ENCODE measurements at regions of chr12 and their contacts with region 1.

Region 1: GRCh38 chr12:27434673-27435565 is 11.6 kb upstream of the SMCO2 start:
- DNase-seq: peak; percentile 7
- H3K4me3 ChIP-seq: no peak overlapping the region
- H3K27ac ChIP-seq: no peak overlapping the region
- H3K4me1 ChIP-seq: no peaks in the 10 kb centered on the region
- H3K27me3 ChIP-seq: no peaks in the 10 kb centered on the region
- CTCF ChIP-seq: peak; percentile 60

Region 2: GRCh38 chr12:27449026-27449425 is 14.1 kb after region 1 on chr12:
- CTCF ChIA-PET with region 1: interaction called, 12 read pairs
- POLR2A ChIA-PET with region 1: no interaction called
- intact Hi-C with region 1: no loop called
- DNase-seq: no peak
- H3K4me3 ChIP-seq: no peak overlapping the region
- H3K27ac ChIP-seq: no peak overlapping the region
- H3K4me1 ChIP-seq: no peaks in the 10 kb centered on the region
- H3K27me3 ChIP-seq: no peaks in the 10 kb centered on the region
- CTCF ChIP-seq: no peak

Region 3: DNA sequence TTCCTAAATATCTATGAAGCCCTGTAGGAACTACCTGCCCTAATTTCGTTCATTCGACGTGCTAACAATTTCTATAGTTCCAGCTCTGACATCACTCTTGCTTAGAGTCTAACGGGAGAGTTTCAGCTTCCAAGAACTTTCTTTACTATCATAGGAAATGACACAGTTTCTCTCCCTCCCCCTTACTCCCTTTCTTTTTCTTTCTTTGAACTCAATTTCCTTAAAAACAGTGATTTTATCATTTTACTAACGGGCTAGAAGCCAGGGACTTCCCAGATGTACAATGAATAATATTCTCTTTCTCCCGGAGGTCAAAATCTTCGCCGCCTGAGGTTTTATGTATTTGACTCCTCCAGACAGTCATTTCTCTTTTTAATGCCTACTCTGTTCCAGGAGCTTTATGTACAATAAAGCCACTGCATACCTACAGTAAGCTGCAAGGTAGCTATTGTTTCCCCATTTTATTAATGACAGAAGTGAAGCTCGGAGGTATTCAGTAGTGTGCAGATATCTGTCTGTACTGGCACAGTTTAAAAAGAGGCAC is 27.3 kb after region 1 on chr12:
- CTCF ChIA-PET with region 1: no interaction called
- POLR2A ChIA-PET with region 1: no interaction called
- intact Hi-C with region 1: no loop called
- DNase-seq: peak; percentile 7
- H3K4me3 ChIP-seq: no peak overlapping the region
- H3K27ac ChIP-seq: no peak overlapping the region
- H3K4me1 ChIP-seq: peaks cover 7% of the 10 kb centered on the region
- H3K27me3 ChIP-seq: no peaks in the 10 kb centered on the region
- CTCF ChIP-seq: no peak

Region 4: DNA sequence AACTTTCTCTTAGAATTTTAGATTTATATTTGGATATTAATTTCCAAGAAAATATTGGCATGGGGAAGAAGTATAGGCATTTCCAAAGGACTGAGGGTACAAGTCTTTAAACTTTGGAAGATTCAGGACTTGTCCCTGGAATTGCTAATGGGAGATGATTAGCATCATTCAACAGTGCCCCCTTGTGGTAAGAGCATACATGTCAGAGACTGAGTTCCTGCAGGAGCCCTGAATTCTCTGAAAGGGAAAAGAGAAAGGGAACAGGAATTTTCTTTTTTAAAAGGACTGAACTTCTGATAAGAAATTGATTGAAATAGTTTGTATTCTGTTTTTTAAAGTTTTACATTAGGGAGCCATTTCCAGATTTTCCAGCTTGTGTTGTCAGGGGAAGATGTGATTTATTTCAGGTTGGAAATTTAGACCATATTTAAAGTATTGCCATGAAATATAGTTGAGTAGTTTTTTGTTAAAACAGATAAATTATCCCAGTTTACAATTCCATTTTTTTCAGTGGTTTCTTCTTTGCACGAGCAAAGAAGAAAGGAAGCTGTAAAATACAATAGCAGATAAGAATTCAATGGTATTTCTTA is 217.3 kb after region 1 on chr12:
- CTCF ChIA-PET with region 1: no interaction called
- POLR2A ChIA-PET with region 1: no interaction called
- intact Hi-C with region 1: loop called (anchors 2 kb)
- DNase-seq: peak; percentile 82
- H3K4me3 ChIP-seq: no peak overlapping the region
- H3K27ac ChIP-seq: no peak overlapping the region
- H3K4me1 ChIP-seq: no peaks in the 10 kb centered on the region
- H3K27me3 ChIP-seq: no peaks in the 10 kb centered on the region
- CTCF ChIP-seq: peak; percentile 92

Region 5: DNA sequence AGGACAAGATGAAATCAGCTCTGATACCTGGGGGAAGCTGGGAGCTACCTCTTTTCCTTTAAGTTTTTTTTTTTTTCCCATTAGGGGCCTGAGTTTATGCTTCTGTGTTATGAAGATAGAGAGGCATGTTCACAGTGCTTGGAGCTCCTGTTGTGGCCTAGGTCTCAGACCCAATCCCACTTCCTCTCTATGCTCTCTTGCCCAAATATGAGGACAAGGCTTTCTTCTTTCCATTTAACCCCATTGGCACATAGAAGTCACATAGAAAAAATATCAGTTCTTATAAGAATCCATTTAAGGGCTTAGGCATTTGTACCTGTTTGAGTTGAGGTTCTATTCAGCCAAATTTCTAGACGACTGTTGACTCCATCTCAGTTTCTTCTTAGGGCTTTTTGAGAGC is 288.3 kb after region 1 on chr12:
- CTCF ChIA-PET with region 1: no interaction called
- POLR2A ChIA-PET with region 1: interaction called, 13 read pairs
- intact Hi-C with region 1: no loop called
- DNase-seq: no peak
- H3K4me3 ChIP-seq: no peak overlapping the region
- H3K27ac ChIP-seq: no peak overlapping the region
- H3K4me1 ChIP-seq: no peaks in the 10 kb centered on the region
- H3K27me3 ChIP-seq: no peaks in the 10 kb centered on the region
- CTCF ChIP-seq: no peak

Region 6: GRCh38 chr12:27840244-27840999 is 405.5 kb after region 1 on chr12:
- CTCF ChIA-PET with region 1: no interaction called
- POLR2A ChIA-PET with region 1: no interaction called
- intact Hi-C with region 1: no loop called
- DNase-seq: no peak
- H3K4me3 ChIP-seq: no peak overlapping the region
- H3K27ac ChIP-seq: no peak overlapping the region
- H3K4me1 ChIP-seq: peaks cover 14% of the 10 kb centered on the region
- H3K27me3 ChIP-seq: no peaks in the 10 kb centered on the region
- CTCF ChIP-seq: peak; percentile 55

Measured in A673 (cell line).